ENCODE measurements at regions of chr1 and their contacts with region 1.

Region 1: GRCh38 chr1:6409053-6409452 is 10.7 kb downstream of the HES2 start:
- DNase-seq: no peak
- H3K4me3 ChIP-seq: no peak overlapping the region
- H3K27ac ChIP-seq: no peak overlapping the region
- H3K4me1 ChIP-seq: peaks cover 0 to 9% (median 3%) of the 10 kb centered on the region in 4 donors
- H3K27me3 ChIP-seq: peaks cover 0 to 50% (median 3%) of the 10 kb centered on the region in 3 donors
- CTCF ChIP-seq: no peak
- EP300 ChIP-seq: no peak
- POLR2A ChIP-seq: no peak

Region 2: DNA sequence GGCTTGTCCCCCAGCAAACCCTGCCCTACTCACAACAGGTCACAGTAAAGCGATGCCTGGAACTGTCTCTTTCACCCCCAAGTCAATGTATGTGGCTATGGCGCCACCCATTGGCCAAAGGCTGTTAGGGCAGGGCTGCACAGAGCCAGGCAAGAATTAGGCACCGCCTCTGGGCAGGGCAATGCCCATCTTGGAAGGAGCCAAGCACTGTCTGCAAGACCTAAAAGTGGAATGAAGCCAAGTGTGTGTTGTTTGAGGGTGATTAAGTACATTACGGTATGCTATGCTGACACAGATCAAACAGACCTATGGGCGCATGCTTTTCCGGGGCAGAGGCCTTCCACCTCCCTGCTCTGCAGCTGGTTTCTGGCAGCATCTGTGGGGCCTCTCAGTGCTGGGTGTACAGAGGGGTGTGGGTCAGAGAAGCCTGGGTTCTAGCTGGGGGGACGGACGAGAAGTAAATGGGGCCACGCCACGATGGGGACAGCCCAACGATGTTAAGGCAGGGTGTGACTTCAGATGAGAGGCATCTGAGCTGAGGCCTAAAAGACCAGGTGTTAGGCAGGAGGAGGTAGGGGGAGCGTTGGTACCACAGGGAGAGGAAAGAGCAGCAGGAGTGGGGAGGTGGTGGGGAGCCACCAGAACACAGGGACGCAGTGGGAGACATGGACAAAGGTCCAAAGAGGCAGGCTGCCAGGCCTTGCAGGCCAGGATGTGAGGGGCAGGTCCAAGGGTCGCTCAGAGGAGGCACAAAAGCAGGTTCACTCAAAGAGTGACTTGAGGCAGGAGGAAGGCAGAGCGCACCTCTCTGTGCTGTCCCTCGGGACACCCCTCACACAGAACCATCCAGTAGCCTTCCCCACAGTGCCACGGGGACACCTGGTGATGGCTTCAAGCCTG is 65.3 kb before region 1 on chr1:
- intact Hi-C with region 1: loop called (anchors 5 kb)
- DNase-seq: peak; percentile 76 to 94
- H3K4me3 ChIP-seq: no peak overlapping the region
- H3K27ac ChIP-seq: no peak overlapping the region
- H3K4me1 ChIP-seq: peaks cover 0 to 18% (median 13%) of the 10 kb centered on the region in 4 donors
- H3K27me3 ChIP-seq: no peaks in the 10 kb centered on the region
- CTCF ChIP-seq: peak in 5 of 7 experiments; percentile 79 to 91 (median 87)
- EP300 ChIP-seq: no peak
- POLR2A ChIP-seq: no peak